ENCODE measurements at regions of chr7 and their contacts with region 1.

Region 1: DNA sequence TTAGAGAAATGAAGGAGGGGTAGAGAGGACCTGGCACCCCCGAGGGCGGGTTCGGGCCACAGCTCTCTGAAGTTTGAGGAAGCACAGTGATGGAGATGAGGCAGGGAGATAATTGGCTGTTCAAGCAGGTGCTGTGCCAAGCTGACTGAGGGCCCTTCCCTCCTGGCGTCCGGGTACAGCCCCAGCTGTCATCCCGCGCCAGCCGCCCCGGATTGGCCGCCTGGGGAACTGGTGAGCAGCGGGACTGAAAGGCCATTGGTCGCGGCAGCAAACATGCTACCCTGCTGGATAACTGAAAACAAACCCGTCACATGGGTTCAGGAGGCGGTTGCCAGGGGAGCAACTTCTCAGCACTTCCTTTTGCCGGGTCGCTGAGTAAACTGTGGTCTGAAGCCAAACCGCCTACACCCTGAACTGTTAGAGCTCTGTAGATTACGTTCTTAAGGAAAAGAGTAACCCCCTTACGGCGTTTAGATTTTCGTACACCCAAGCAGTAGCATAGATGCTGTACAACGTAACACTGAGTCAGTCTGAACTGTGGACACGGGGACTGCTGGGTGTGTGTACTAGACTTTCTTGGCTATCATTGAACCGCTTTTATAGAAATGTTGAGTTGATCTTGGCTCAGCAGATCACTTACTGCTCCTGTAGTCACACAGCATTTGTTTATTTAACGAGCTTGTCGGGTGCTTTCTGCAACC is 1.3 kb downstream of the INSIG1 start:
- DNase-seq: peak; percentile 73
- ATAC-seq: peak; percentile 74
- H3K4me3 ChIP-seq: peak overlapping the region; percentile 47 to 78
- H3K27ac ChIP-seq: peak overlapping the region; percentile 90
- H3K4me1 ChIP-seq: peaks cover 20 to 40% of the 10 kb centered on the region in 2 experiments
- H3K27me3 ChIP-seq: no peaks in the 10 kb centered on the region
- CTCF ChIP-seq: no peak
- POLR2A ChIP-seq: no peak
- RAD21 ChIP-seq: no peak

Region 2: GRCh38 chr7:155003376-155004214 is 295.4 kb before region 1 on chr7:
- CTCF ChIA-PET with region 1: no interaction called
- POLR2A ChIA-PET with region 1: no interaction called
- RAD21 ChIA-PET with region 1: no interaction called
- intact Hi-C with region 1: loop called (anchors 2 kb)
- DNase-seq: peak; percentile 35
- ATAC-seq: peak; percentile 77
- H3K4me3 ChIP-seq: peak overlapping the region; percentile 66 to 93
- H3K27ac ChIP-seq: peak overlapping the region; percentile 88
- H3K4me1 ChIP-seq: peaks cover 5 to 19% of the 10 kb centered on the region in 2 experiments; a peak in 3 of 4 replicates
- H3K27me3 ChIP-seq: no peaks in the 10 kb centered on the region
- CTCF ChIP-seq: no peak
- POLR2A ChIP-seq: peak; percentile 59
- RAD21 ChIP-seq: no peak

Region 3: DNA sequence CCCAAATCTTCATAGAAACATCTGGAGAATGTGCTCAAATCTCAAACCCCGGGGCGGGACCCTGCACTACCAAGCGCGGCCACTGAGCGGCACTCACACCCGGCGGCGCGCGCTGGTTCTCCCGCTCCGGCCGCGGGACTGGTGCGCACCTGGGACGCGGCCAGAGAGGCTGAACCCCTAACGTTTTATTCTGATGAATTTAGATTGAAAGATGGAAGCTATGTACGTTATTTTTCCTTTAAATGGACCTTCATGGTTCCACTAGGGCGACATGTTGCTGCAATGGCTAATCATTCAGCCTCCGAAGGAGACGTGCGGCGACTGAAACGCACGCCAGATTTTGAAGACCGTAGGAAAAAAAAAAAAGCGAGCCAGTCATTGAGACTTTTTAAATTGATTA is 108.3 kb before region 1 on chr7:
- CTCF ChIA-PET with region 1: no interaction called
- POLR2A ChIA-PET with region 1: no interaction called
- RAD21 ChIA-PET with region 1: no interaction called
- intact Hi-C with region 1: loop called (anchors 5 kb)
- DNase-seq: no peak
- ATAC-seq: peak; percentile 94
- H3K4me3 ChIP-seq: no peak overlapping the region
- H3K27ac ChIP-seq: no peak overlapping the region
- H3K4me1 ChIP-seq: peaks cover 0 to 3% of the 10 kb centered on the region in 2 experiments; a peak in 1 of 4 replicates
- H3K27me3 ChIP-seq: no peaks in the 10 kb centered on the region
- CTCF ChIP-seq: peak; percentile 82 to 88 (median 84)
- POLR2A ChIP-seq: no peak
- RAD21 ChIP-seq: peak; percentile 96

Region 4: DNA sequence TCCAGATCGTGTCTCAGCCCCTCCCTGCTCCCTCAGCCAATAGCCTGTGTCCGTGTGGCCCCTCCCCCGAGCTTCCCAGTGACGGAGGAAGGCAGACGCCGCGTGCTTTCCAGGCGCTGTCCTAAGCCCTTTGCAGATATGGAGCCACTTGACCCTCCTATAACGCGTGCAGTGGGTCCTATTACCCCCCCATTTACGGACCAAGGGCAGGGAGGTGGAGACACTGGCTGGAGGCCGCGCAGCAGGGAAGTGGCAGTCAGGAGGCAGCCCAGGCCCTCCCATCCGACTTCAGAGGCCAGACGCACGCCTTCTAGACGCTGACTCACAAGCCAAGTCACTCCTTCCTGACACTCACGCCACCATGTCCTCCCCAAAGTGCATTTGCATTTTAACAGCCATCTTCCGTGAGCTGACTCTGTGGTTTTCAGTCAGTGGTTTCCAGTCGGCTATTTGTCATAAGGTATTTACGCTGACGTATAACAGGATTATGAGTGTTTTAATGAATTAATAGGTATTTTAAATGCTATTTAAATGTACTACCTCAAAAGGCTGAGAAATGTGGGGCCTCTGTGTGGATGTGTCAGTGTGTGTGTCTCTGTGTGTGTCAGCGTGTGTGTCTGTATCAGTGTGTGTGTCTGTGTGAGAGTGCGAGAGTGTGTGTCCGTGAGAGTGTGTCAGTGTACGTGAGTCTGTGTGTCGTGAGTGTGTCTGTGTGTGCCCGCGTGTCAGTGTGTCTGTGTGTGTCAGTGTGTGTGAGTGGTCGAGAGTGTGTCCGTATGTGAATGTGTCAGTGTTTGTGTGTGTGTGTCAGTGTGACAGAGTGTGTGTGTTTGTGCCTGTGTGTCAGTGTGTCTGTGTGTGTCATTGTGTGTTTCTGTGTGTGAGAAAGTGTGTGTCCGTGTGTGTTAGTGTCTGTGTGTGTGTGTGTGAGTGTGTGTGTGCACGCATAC is 93.3 kb before region 1 on chr7:
- CTCF ChIA-PET with region 1: no interaction called
- POLR2A ChIA-PET with region 1: interaction called, 9 read pairs
- RAD21 ChIA-PET with region 1: no interaction called
- intact Hi-C with region 1: loop called (anchors 2 kb)
- DNase-seq: peak; percentile 91
- ATAC-seq: peak; percentile 89
- H3K4me3 ChIP-seq: peak overlapping the region; percentile 32 to 37
- H3K27ac ChIP-seq: peak overlapping the region; percentile 59
- H3K4me1 ChIP-seq: peaks cover 28 to 47% of the 10 kb centered on the region in 2 experiments
- H3K27me3 ChIP-seq: no peaks in the 10 kb centered on the region
- CTCF ChIP-seq: no peak
- POLR2A ChIP-seq: peak; percentile 3
- RAD21 ChIP-seq: no peak

Region 5: DNA sequence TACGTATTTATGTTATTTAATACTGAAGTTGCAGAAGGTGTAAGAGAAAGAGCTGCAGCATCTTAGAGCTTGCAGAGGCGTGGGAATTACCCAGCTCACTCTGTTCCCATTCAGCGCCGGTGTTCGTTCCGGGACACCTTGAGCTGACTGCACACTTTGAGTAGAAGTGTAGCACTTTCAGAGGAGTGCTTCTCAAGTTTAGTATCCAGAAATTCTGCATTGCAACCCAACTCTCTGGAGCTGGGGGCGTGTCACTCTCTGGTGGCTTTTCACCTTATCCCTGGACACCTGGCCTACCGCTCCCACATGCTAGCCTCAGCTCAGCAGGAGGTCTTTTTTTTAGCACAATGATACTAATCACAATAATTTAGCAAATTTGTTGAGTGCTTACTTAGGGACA is 579.7 kb after region 1 on chr7:
- CTCF ChIA-PET with region 1: no interaction called
- POLR2A ChIA-PET with region 1: no interaction called
- RAD21 ChIA-PET with region 1: no interaction called
- intact Hi-C with region 1: no loop called
- DNase-seq: no peak
- ATAC-seq: no peak
- H3K4me3 ChIP-seq: no peak overlapping the region
- H3K27ac ChIP-seq: no peak overlapping the region
- H3K4me1 ChIP-seq: no peaks in the 10 kb centered on the region
- H3K27me3 ChIP-seq: no peaks in the 10 kb centered on the region
- CTCF ChIP-seq: no peak
- POLR2A ChIP-seq: no peak
- RAD21 ChIP-seq: no peak

Region 6: GRCh38 chr7:155947051-155947450 is 648.1 kb after region 1 on chr7:
- CTCF ChIA-PET with region 1: no interaction called
- POLR2A ChIA-PET with region 1: no interaction called
- RAD21 ChIA-PET with region 1: no interaction called
- intact Hi-C with region 1: no loop called
- DNase-seq: no peak
- ATAC-seq: no peak
- H3K4me3 ChIP-seq: no peak overlapping the region
- H3K27ac ChIP-seq: no peak overlapping the region
- H3K4me1 ChIP-seq: peaks cover 24 to 50% of the 10 kb centered on the region in 2 experiments
- H3K27me3 ChIP-seq: no peaks in the 10 kb centered on the region
- CTCF ChIP-seq: no peak
- POLR2A ChIP-seq: no peak
- RAD21 ChIP-seq: no peak

Measured in HCT116 (cell line).